T-cell (primary cell): ENCODE measurements at regions of chr16 and their contacts with region 1.

Region 1: DNA sequence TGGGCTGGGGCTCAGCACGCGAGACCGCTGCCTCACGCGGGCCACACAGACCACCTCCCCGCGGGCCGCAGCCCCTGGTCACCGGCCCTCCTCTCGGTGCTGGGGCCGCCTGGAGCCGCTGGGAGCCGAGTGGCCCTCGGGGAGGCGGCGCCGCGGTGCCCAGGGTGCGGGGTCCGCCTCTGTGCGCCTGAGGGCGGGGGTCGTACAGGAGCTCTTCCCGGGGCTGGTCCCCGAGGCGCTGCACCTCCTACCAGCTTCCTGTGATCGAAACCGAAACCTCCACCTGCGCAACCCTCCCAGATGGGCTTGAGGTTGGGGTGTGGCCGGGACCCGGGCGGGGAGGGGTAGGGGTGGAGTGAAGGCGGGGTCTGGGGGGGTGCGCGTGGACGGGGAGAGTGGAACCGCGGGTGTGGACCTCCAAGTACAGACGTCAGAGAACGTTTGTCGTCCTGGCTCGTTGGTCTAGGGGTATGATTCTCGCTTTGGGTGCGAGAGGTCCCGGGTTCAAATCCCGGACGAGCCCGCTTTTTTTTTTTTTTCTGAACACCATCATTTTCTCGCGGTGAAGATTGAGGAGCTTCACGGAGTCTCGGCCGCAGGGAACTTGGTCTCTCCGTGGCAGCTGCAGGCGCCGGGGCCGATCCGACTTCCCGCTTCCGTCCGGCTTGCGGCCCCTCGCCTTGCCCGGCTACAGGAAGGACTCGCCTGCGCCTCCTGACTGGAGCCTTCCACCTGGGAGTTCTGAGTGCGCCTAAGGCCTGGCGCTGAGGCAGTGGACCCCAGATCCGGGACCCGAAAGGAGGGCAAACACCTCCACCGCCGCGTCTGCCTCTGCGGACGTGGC is 23.9 kb downstream of the ZNF213 start:
- DNase-seq: peak; percentile 86 to 97 (median 94)
- ATAC-seq: peak; percentile 89 to 93 (median 92)
- H3K4me3 ChIP-seq: peak overlapping the region; percentile 57 to 75
- H3K4me3 Mint-ChIP-seq: peak overlapping the region; percentile 87 to 96 (median 91)
- H3K27ac ChIP-seq: peak overlapping the region; percentile 69
- H3K27ac Mint-ChIP-seq: peak overlapping the region; percentile 92 to 94
- H3K4me1 ChIP-seq: peaks cover 12 to 30% of the 10 kb centered on the region in 2 experiments
- H3K4me1 Mint-ChIP-seq: peaks cover 22 to 31% (median 24%) of the 10 kb centered on the region in 3 donors
- H3K27me3 ChIP-seq: peaks cover 0 to 7% of the 10 kb centered on the region in 2 experiments
- H3K27me3 Mint-ChIP-seq: no peaks in the 10 kb centered on the region

Region 2: GRCh38 chr16:3171855-3172593 is 13.3 kb after region 1 on chr16:
- CTCF ChIA-PET with region 1: interaction called in 1 of 2 experiments, 9 read pairs
- POLR2A ChIA-PET with region 1: interaction called, 3 to 16 read pairs
- DNase-seq: peak in 7 of 35 experiments; percentile 24 to 48 (median 34)
- ATAC-seq: peak in 3 of 4 experiments; percentile 43 to 46 (median 45)
- H3K4me3 ChIP-seq: peak overlapping the region; percentile 38 to 49
- H3K4me3 Mint-ChIP-seq: peak overlapping the region; percentile 74 to 83 (median 77)
- H3K27ac ChIP-seq: no peak overlapping the region
- H3K27ac Mint-ChIP-seq: peak overlapping the region; percentile 81
- H3K4me1 ChIP-seq: peaks cover 3 to 54% of the 10 kb centered on the region in 2 experiments
- H3K4me1 Mint-ChIP-seq: peaks cover 33 to 38% (median 38%) of the 10 kb centered on the region in 3 donors
- H3K27me3 ChIP-seq: peaks cover 18 to 73% of the 10 kb centered on the region in 2 experiments
- H3K27me3 Mint-ChIP-seq: peaks cover 32 to 50% of the 10 kb centered on the region in 2 donors

Region 3: DNA sequence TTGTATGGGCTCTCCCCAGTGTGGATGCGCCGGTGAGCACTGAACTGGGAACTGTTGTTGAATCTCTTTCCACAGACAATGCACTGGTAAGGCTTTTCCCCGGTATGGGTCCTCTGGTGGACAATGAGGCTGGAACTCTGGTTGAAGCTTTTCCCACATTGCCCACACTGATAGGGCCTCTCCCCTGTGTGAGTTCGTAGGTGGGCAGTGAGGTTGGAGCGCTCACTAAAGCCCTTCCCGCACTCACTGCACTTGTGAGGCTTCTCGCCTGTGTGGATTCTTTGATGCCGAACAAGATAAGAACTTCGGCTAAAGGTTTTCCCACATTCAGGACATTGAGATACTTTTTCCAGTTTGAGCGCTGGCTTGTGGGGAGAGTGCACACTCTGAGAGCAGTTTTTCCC is 224.4 kb after region 1 on chr16:
- CTCF ChIA-PET with region 1: no interaction called
- POLR2A ChIA-PET with region 1: no interaction called
- DNase-seq: no peak
- ATAC-seq: no peak
- H3K4me3 ChIP-seq: peak overlapping the region in 1 of 2 donors; percentile 44
- H3K4me3 Mint-ChIP-seq: no peak overlapping the region
- H3K27ac ChIP-seq: no peak overlapping the region
- H3K27ac Mint-ChIP-seq: no peak overlapping the region
- H3K4me1 ChIP-seq: no peaks in the 10 kb centered on the region
- H3K4me1 Mint-ChIP-seq: peaks cover 0 to 3% (median 0%) of the 10 kb centered on the region in 3 donors
- H3K27me3 ChIP-seq: no peaks in the 10 kb centered on the region
- H3K27me3 Mint-ChIP-seq: no peaks in the 10 kb centered on the region